Esophagus muscularis mucosa (tissue), 4 donors: ENCODE measurements at regions of chrX and their contacts with region 1.

Region 1: GRCh38 chrX:111445486-111445885 is 33.5 kb upstream of the DCX start:
- DNase-seq: no peak
- H3K4me3 ChIP-seq: no peak overlapping the region
- H3K27ac ChIP-seq: no peak overlapping the region
- H3K4me1 ChIP-seq: no peaks in the 10 kb centered on the region
- H3K27me3 ChIP-seq: no peaks in the 10 kb centered on the region
- CTCF ChIP-seq: peak; percentile 22 to 53 (median 50)
- EP300 ChIP-seq: no peak
- POLR2A ChIP-seq: no peak

Region 2: DNA sequence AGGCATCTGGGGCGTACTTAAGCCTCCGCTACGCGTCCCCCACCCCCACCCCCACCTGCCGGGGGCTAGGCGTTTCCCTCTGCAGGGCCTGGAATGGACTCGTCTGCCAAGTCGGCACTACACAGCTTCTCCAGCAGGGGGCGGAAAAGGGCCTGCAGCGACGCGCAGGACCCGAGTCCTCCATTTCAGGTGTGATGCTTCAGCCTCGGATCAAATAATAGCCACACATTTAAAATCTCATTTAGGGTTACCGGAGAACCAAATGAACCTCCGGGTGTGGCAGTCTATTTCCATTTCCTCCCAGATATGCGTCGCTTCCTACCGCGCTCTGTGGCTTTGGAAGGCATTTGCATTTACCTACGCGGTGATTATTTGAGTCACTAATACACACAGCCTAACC is 346.6 kb before region 1 on chrX:
- intact Hi-C with region 1: loop called (anchors 10 kb)
- DNase-seq: no peak
- H3K4me3 ChIP-seq: no peak overlapping the region
- H3K27ac ChIP-seq: no peak overlapping the region
- H3K4me1 ChIP-seq: peaks cover 0 to 17% (median 7%) of the 10 kb centered on the region in 4 donors
- H3K27me3 ChIP-seq: peaks cover 0 to 30% (median 2%) of the 10 kb centered on the region in 4 donors
- CTCF ChIP-seq: peak; percentile 31 to 59 (median 58)
- EP300 ChIP-seq: no peak
- POLR2A ChIP-seq: no peak

Region 3: DNA sequence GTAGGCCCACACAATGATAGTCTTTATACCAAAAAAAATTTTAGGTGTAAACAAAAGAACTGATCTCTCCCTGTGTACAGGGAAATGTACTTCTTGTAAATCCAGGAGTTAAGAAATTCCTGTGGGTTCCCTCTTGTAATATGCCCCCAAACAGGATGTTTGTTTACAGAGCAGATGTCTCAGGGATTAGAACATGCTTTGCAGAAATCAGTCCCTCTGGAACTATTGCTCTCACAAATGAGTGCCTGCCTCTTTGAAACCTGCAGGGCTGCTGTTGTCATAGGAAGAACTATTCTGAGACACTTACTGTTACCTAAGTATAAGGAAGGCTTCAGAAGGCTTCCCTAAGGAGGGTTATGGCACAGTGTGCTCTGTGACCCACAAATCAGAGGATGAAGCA is 313.9 kb before region 1 on chrX:
- intact Hi-C with region 1: no loop called
- DNase-seq: no peak
- H3K4me3 ChIP-seq: no peak overlapping the region
- H3K27ac ChIP-seq: no peak overlapping the region
- H3K4me1 ChIP-seq: no peaks in the 10 kb centered on the region
- H3K27me3 ChIP-seq: peaks cover 0 to 5% (median 0%) of the 10 kb centered on the region in 4 donors
- CTCF ChIP-seq: no peak
- EP300 ChIP-seq: no peak
- POLR2A ChIP-seq: no peak

Region 4: GRCh38 chrX:111168314-111168713 is 277.2 kb before region 1 on chrX:
- intact Hi-C with region 1: loop called (anchors 10 kb)
- DNase-seq: no peak
- H3K4me3 ChIP-seq: no peak overlapping the region
- H3K27ac ChIP-seq: no peak overlapping the region
- H3K4me1 ChIP-seq: no peaks in the 10 kb centered on the region
- H3K27me3 ChIP-seq: no peaks in the 10 kb centered on the region
- CTCF ChIP-seq: no peak
- EP300 ChIP-seq: no peak
- POLR2A ChIP-seq: no peak

Region 5: DNA sequence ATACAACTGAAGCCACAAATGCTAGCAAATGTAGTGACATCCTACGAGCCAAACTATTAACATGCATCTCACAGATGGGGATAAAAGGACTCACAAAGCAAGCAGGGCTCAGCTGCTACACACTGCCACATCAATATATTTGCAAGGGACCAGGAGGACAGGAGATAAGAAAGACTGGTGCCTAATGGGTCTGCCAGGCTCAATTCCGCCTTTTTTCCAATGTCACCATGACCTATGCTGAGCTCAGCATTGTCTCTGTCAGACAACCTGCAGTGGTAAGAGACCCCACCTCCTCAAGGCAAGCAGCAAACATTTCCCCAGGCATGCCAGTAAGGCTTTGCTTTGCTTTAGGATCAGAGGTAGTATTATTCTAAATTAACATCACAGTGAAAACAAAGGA is 33.9 kb before region 1 on chrX:
- intact Hi-C with region 1: no loop called
- DNase-seq: no peak
- H3K4me3 ChIP-seq: no peak overlapping the region
- H3K27ac ChIP-seq: no peak overlapping the region
- H3K4me1 ChIP-seq: no peaks in the 10 kb centered on the region
- H3K27me3 ChIP-seq: peaks cover 0 to 18% (median 0%) of the 10 kb centered on the region in 4 donors
- CTCF ChIP-seq: no peak
- EP300 ChIP-seq: no peak
- POLR2A ChIP-seq: no peak